ENCODE measurements at regions of chr17 and their contacts with region 1.

Region 1: GRCh38 chr17:1331708-1332107 is 52.2 kb downstream of the TRARG1 start:
- DNase-seq: no peak
- H3K4me3 ChIP-seq: no peak overlapping the region
- H3K27ac ChIP-seq: no peak overlapping the region
- H3K4me1 ChIP-seq: peaks cover 0 to 15% of the 10 kb centered on the region in 2 donors
- H3K27me3 ChIP-seq: no peaks in the 10 kb centered on the region
- CTCF ChIP-seq: no peak
- POLR2A ChIP-seq: no peak

Region 2: GRCh38 chr17:1122533-1123392 is 208.9 kb before region 1 on chr17:
- intact Hi-C with region 1: loop called (anchors 10 kb)
- DNase-seq: peak; percentile 74 to 84
- H3K4me3 ChIP-seq: no peak overlapping the region
- H3K27ac ChIP-seq: peak overlapping the region in 2 of 3 donors; percentile 37 to 49
- H3K4me1 ChIP-seq: peaks cover 4 to 19% of the 10 kb centered on the region in 2 donors
- H3K27me3 ChIP-seq: no peaks in the 10 kb centered on the region
- CTCF ChIP-seq: peak; percentile 74 to 94 (median 94)
- POLR2A ChIP-seq: no peak

Region 3: GRCh38 chr17:1260086-1260769 is 71.5 kb before region 1 on chr17:
- intact Hi-C with region 1: loop called (anchors 2 kb)
- DNase-seq: no peak
- H3K4me3 ChIP-seq: peak overlapping the region in 1 of 3 donors; percentile 28
- H3K27ac ChIP-seq: no peak overlapping the region
- H3K4me1 ChIP-seq: peaks cover 6 to 9% of the 10 kb centered on the region in 2 donors
- H3K27me3 ChIP-seq: no peaks in the 10 kb centered on the region
- CTCF ChIP-seq: no peak
- POLR2A ChIP-seq: no peak

Region 4: GRCh38 chr17:1275962-1276736 is 55.6 kb before region 1 on chr17:
- intact Hi-C with region 1: loop called (anchors 5 kb)
- DNase-seq: peak; percentile 57 to 68
- H3K4me3 ChIP-seq: no peak overlapping the region
- H3K27ac ChIP-seq: no peak overlapping the region
- H3K4me1 ChIP-seq: no peaks in the 10 kb centered on the region
- H3K27me3 ChIP-seq: no peaks in the 10 kb centered on the region
- CTCF ChIP-seq: peak; percentile 59 to 89 (median 69)
- POLR2A ChIP-seq: no peak

Measured in thyroid gland (tissue), 4 donors.